ENCODE measurements at regions of chr16 and their contacts with region 1.

Region 1: DNA sequence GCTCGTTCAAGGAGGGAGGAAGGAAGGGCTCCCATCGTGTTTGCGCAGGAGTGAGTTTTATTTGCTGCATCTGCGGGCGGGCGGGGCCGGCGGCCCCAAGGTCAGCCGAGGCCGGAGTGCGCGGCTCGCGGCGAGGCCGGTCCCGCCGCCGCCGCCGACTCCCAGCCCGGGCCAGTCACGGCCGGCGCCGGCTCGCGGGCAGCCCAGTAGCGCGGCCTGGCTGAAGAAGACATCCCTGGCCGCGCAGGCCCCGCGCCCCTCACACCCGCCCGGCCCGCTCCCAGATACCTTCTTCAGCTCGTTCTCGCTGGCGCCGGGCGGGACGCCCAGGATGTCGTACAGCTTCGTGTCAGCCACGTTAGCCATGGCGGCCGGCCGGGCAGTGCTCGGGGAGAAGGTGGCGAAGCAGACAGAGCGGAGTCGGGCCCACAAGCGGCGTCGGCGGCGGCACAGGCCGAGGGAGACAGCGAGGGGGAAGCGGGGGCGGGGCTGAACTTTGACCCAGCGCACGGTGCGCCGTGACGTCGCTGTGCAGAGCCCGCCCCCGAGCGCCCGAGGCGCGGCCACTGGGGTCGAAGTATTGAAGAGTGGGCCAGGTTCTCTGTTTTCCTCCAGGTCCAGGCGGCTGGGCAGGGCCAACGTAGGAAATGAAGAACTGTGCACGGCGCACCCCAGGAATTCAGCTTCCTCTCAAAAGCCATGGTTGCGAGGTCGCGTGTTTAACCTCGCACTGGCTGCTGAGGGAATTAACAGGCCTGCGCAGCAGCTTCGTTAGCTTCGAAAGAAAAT is at the start of gene DNAJA2:
- DNase-seq: peak; percentile 96
- ATAC-seq: peak; percentile 90
- H3K4me3 Mint-ChIP-seq: peak within 1 kb of the TSS; percentile 100
- H3K27ac Mint-ChIP-seq: peak within 1 kb of the TSS; percentile 99
- H3K4me1 Mint-ChIP-seq: peaks cover 34% of the 10 kb centered on the region
- H3K27me3 Mint-ChIP-seq: no peaks in the 10 kb centered on the region
- total RNA-seq, gene DNAJA2: 60.0 to 62.3 TPM

Region 2: DNA sequence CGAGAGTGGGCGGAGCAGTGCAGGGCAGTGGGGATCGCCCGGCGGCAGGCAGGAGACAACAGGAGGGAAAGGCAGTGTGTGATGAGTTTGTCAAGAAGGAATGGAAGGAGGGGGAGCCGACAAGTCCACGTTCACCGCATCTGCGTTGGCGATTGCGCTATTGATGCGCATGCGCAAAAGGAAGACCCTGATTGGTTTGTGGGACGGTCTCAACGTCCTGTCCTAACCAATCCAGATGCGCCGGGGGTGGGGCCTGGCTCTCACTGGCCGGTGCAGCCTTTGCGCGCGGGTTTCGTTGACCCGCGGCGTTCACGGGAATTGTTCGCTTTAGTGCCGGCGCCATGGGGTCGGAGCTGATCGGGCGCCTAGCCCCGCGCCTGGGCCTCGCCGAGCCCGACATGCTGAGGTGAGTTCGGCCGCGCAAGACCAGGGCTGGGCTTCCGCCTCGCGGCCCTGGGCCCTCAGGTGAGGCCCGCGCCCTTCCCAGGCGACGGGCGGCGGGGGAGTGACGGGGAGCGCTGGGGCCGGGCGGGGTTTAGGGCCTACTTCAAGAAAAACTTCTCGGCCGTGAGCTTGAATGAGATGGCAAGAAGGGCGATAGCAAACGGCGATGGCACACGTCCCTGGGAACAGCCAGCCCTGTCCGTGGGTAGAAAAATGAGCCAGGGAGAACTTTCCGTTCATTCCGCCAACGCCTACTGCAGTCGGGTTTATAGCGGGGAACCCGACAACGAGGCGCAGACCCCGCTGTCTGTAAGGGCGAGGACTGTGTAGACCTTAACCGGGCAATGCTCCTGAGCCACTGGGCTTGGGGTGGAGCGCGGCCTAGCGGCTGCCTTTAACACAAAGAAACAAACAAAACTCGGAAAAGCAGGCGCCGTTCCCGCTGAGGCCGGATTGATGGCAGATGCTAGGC is 283.8 kb before region 1 on chr16 and contains the start of gene ORC6:
- POLR2A ChIA-PET with region 1: interaction called, 12 read pairs
- DNase-seq: peak; percentile 94
- ATAC-seq: peak; percentile 80
- H3K4me3 Mint-ChIP-seq: no peak within 1 kb of the TSS
- H3K27ac Mint-ChIP-seq: no peak within 1 kb of the TSS
- H3K4me1 Mint-ChIP-seq: peaks cover 33% of the 10 kb centered on the region
- H3K27me3 Mint-ChIP-seq: no peaks in the 10 kb centered on the region
- total RNA-seq, gene ORC6: 28.3 to 32.6 TPM

Region 3: GRCh38 chr16:46830902-46831647 is 142.3 kb before region 1 on chr16 and contains the start of gene C16orf87:
- POLR2A ChIA-PET with region 1: interaction called, 11 read pairs
- DNase-seq: peak; percentile 94
- ATAC-seq: peak; percentile 94
- H3K4me3 Mint-ChIP-seq: peak within 1 kb of the TSS; percentile 100
- H3K27ac Mint-ChIP-seq: peak within 1 kb of the TSS; percentile 100
- H3K4me1 Mint-ChIP-seq: peaks cover 20% of the 10 kb centered on the region
- H3K27me3 Mint-ChIP-seq: peaks cover 19% of the 10 kb centered on the region
- total RNA-seq, gene C16orf87: 8.8 to 9.5 TPM

Region 4: DNA sequence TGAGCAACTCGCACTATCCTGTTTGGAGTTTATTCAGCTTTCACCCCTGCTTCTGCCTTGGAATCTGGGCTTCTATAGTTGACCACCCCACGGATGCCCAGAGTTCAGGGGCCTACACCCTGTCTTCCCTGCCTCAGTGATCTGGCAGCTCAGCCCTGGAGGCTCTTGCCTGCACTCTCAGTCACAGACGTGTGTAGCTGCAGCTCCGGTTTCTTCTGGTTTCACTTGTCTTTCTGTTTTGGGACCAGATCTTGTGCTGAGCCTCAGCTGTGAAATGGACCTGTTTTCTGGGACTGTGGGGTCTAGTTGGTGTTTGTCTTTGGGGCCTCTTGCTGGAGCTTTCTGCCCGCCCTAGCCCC is 83.5 kb before region 1 on chr16:
- POLR2A ChIA-PET with region 1: no interaction called
- DNase-seq: no peak
- ATAC-seq: no peak
- H3K4me3 Mint-ChIP-seq: no peak overlapping the region
- H3K27ac Mint-ChIP-seq: no peak overlapping the region
- H3K4me1 Mint-ChIP-seq: peaks cover 10% of the 10 kb centered on the region
- H3K27me3 Mint-ChIP-seq: peaks cover 4% of the 10 kb centered on the region

Region 5: GRCh38 chr16:46961373-46962353 is 11.7 kb before region 1 on chr16:
- POLR2A ChIA-PET with region 1: interaction called, 15 read pairs
- DNase-seq: no peak
- ATAC-seq: peak; percentile 90
- H3K4me3 Mint-ChIP-seq: peak overlapping the region; percentile 24
- H3K27ac Mint-ChIP-seq: peak overlapping the region; percentile 52
- H3K4me1 Mint-ChIP-seq: peaks cover 17% of the 10 kb centered on the region
- H3K27me3 Mint-ChIP-seq: no peaks in the 10 kb centered on the region

Region 6: DNA sequence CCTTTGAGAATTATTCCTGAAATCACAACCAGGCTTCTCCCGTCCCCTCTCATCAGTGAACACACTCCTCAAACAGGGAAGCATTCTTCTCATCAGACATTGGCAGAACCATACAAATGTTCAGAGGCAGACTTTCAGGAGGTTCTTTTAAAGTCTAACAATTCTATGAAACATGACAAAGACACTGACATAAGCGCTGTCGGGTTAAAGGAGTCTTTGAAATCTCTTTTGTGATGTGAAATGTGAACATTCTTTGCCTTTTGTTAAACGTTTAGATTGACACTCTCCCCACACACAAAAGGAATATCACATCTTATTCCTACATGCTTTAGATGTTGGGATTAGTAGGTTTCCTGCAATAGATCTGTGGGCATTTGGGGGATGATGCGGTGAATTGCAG is 106.5 kb after region 1 on chr16:
- POLR2A ChIA-PET with region 1: no interaction called
- DNase-seq: no peak
- ATAC-seq: no peak
- H3K4me3 Mint-ChIP-seq: no peak overlapping the region
- H3K27ac Mint-ChIP-seq: no peak overlapping the region
- H3K4me1 Mint-ChIP-seq: no peaks in the 10 kb centered on the region
- H3K27me3 Mint-ChIP-seq: no peaks in the 10 kb centered on the region

Region 7: GRCh38 chr16:47125757-47126156 is 152.4 kb after region 1 on chr16:
- POLR2A ChIA-PET with region 1: no interaction called
- DNase-seq: no peak
- ATAC-seq: no peak
- H3K4me3 Mint-ChIP-seq: no peak overlapping the region
- H3K27ac Mint-ChIP-seq: no peak overlapping the region
- H3K4me1 Mint-ChIP-seq: no peaks in the 10 kb centered on the region
- H3K27me3 Mint-ChIP-seq: no peaks in the 10 kb centered on the region

Region 8: DNA sequence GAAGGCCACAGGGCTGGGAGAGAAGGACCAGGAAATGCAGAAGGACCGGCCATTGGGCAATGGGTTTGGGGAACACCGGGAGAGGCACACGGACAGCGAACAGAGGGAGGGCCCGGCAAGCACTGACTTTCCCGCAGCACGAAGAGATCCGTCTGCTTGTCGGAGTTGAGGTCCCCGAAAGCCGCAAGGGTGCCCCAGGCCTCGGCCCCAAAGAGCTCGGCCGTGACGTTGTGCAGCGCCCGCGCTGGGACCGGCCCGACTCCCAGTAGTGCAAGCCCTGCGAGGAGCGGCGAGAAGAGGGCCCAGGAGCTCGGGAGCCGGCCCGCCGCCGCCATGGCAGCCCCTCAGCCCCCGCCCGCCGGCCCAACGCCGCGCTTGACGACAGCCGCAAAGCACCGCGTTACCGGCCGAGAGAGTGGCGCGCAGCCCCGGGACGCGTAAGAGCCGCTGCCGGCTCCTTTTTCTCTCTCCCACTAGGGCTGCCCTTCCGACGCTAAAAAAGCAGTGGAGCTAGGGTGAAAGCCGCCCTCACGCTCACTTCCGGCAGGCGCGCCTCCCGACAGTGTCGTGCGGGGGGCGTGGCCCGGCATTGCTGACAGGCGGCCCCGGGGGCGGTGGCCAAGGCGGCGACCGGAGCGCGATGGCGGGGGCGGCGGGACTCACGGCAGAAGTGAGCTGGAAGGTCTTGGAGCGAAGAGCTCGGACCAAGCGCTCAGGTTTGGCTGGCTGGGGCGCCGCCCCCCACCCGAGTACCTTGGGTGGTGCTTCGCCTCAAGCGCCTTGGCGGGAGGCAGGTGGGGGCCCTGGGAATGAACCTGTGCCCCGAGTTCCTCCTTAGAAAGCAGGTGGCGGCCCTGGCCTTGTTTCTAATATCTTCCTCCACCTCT is 487.6 kb after region 1 on chr16 and contains the starts of genes ITFG1 and PHKB:
- POLR2A ChIA-PET with region 1: interaction called, 10 read pairs
- DNase-seq: peak; percentile 97
- ATAC-seq: peak; percentile 96
- H3K4me3 Mint-ChIP-seq: peak within 1 kb of the TSS; percentile 85
- H3K27ac Mint-ChIP-seq: peak within 1 kb of the TSS; percentile 96
- H3K4me1 Mint-ChIP-seq: peaks cover 24% of the 10 kb centered on the region
- H3K27me3 Mint-ChIP-seq: no peaks in the 10 kb centered on the region
- total RNA-seq, gene ITFG1: 22.1 to 24.9 TPM
- total RNA-seq, gene PHKB: 37.5 to 39.3 TPM